ENCODE measurements at regions of chr12 and their contacts with region 1.

Region 1: GRCh38 chr12:88153959-88154358 is 11.9 kb downstream of the TMTC3 start:
- DNase-seq: peak; percentile 46
- H3K4me3 Mint-ChIP-seq: no peak overlapping the region
- H3K27ac Mint-ChIP-seq: no peak overlapping the region
- H3K4me1 Mint-ChIP-seq: peaks cover 8% of the 10 kb centered on the region
- H3K27me3 Mint-ChIP-seq: no peaks in the 10 kb centered on the region
- CTCF ChIP-seq: peak; percentile 50

Region 2: DNA sequence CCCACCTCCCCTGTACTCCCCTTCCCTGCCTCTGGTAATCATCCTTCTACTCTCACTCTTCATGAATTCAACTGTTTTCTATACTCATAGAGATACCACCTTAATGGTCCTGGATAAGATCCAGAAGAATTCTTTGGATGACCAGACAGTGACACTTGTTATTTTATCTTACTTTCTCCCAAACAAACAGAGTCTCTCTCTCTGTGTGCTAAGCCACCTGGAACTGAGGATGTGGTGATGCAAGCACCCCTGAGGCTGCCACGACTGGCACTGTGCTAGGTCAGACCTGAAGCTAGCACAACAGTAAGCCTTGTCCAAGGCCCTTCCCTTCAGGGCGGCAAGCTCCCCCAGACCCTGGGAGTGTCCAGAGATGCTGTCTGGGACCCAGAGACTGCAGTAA is 374.9 kb before region 1 on chr12:
- CTCF ChIA-PET with region 1: no interaction called
- POLR2A ChIA-PET with region 1: no interaction called
- intact Hi-C with region 1: no loop called
- DNase-seq: peak; percentile 59
- H3K4me3 Mint-ChIP-seq: no peak overlapping the region
- H3K27ac Mint-ChIP-seq: peak overlapping the region; percentile 56
- H3K4me1 Mint-ChIP-seq: peaks cover 25% of the 10 kb centered on the region
- H3K27me3 Mint-ChIP-seq: no peaks in the 10 kb centered on the region
- CTCF ChIP-seq: no peak

Region 3: GRCh38 chr12:88092771-88093170 is 61.2 kb before region 1 on chr12:
- CTCF ChIA-PET with region 1: no interaction called
- POLR2A ChIA-PET with region 1: no interaction called
- intact Hi-C with region 1: no loop called
- DNase-seq: no peak
- H3K4me3 Mint-ChIP-seq: no peak overlapping the region
- H3K27ac Mint-ChIP-seq: no peak overlapping the region
- H3K4me1 Mint-ChIP-seq: no peaks in the 10 kb centered on the region
- H3K27me3 Mint-ChIP-seq: no peaks in the 10 kb centered on the region
- CTCF ChIP-seq: no peak

Region 4: GRCh38 chr12:88141770-88142609 is 12.0 kb before region 1 on chr12 and contains the starts of genes CEP290 and TMTC3:
- CTCF ChIA-PET with region 1: interaction called, 9 read pairs
- POLR2A ChIA-PET with region 1: interaction called, 18 read pairs
- intact Hi-C with region 1: no loop called
- DNase-seq: peak; percentile 100
- H3K4me3 Mint-ChIP-seq: peak within 1 kb of the TSS; percentile 96
- H3K27ac Mint-ChIP-seq: peak within 1 kb of the TSS; percentile 81
- H3K4me1 Mint-ChIP-seq: peaks cover 38% of the 10 kb centered on the region
- H3K27me3 Mint-ChIP-seq: no peaks in the 10 kb centered on the region
- CTCF ChIP-seq: no peak
- total RNA-seq, gene CEP290: 18.7 and 22.3 TPM in 2 replicates
- total RNA-seq, gene TMTC3: 19.0 and 22.2 TPM in 2 replicates

Region 5: GRCh38 chr12:88299567-88300101 is 145.7 kb after region 1 on chr12:
- CTCF ChIA-PET with region 1: no interaction called
- POLR2A ChIA-PET with region 1: no interaction called
- intact Hi-C with region 1: loop called (anchors 5 kb)
- DNase-seq: peak; percentile 86
- H3K4me3 Mint-ChIP-seq: peak overlapping the region; percentile 19
- H3K27ac Mint-ChIP-seq: peak overlapping the region; percentile 85
- H3K4me1 Mint-ChIP-seq: peaks cover 16% of the 10 kb centered on the region
- H3K27me3 Mint-ChIP-seq: no peaks in the 10 kb centered on the region
- CTCF ChIP-seq: no peak

Region 6: GRCh38 chr12:88366101-88366500 is 212.1 kb after region 1 on chr12:
- CTCF ChIA-PET with region 1: no interaction called
- POLR2A ChIA-PET with region 1: no interaction called
- intact Hi-C with region 1: no loop called
- DNase-seq: no peak
- H3K4me3 Mint-ChIP-seq: no peak overlapping the region
- H3K27ac Mint-ChIP-seq: no peak overlapping the region
- H3K4me1 Mint-ChIP-seq: peaks cover 20% of the 10 kb centered on the region
- H3K27me3 Mint-ChIP-seq: no peaks in the 10 kb centered on the region
- CTCF ChIP-seq: no peak

Region 7: DNA sequence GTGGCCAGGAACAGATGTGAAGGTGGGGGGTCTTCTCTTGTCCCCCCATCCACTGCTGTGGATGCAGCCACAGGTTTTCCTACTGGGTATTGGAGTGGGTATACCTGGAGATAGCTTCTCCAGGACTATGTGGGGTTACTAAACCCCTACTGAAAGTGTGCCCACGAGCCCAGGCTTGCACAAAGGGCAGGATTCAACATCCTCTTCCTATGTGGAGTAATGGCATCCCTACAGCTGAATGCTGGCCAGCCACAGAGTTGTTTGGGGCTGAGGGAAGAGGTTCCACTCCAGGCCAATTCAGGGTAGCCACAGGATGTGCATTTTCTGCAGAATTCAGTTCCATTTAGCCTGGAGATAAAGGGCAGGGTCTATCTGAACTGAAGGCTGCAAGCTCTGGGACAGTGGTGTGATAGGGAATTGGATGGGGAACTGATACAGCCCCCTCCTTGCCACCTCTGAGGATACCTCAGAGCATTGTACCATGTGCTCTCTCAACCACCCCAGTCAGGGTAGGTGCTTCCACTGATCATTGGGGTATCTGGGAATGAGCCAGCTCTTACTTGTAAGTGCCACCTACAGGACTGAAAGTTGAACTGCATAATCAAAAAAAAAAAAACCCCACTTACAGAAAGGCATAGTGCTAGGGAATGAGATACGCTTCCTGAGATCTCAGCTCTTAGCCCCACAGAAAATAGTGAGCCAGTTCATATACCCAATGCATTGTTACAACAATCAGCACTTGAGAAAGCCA is 239.2 kb after region 1 on chr12:
- CTCF ChIA-PET with region 1: interaction called, 5 read pairs
- POLR2A ChIA-PET with region 1: no interaction called
- intact Hi-C with region 1: loop called (anchors 1 kb)
- DNase-seq: peak; percentile 57
- H3K4me3 Mint-ChIP-seq: no peak overlapping the region
- H3K27ac Mint-ChIP-seq: peak overlapping the region; percentile 23
- H3K4me1 Mint-ChIP-seq: peaks cover 17% of the 10 kb centered on the region
- H3K27me3 Mint-ChIP-seq: no peaks in the 10 kb centered on the region
- CTCF ChIP-seq: peak; percentile 52

Region 8: DNA sequence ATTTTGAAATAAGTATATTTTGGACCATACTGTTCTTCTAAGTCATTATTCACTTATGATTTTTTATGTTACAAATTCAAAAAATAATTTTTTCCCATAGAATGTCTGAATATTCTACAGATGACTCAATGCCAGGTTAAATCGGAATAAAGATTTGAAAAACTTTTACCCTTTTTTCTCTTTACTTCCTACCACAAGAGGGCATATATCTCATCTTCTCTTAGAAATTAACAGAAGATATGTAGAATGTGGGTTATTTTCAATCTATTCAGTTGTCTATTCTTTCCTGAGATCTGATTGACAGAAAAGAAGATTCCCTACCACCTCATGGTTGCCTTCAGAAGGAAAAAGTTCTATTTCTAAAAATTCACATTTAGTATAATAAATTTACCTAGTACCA is 479.4 kb after region 1 on chr12:
- CTCF ChIA-PET with region 1: no interaction called
- POLR2A ChIA-PET with region 1: no interaction called
- intact Hi-C with region 1: loop called (anchors 5 kb)
- DNase-seq: peak; percentile 13
- H3K4me3 Mint-ChIP-seq: no peak overlapping the region
- H3K27ac Mint-ChIP-seq: no peak overlapping the region
- H3K4me1 Mint-ChIP-seq: peaks cover 16% of the 10 kb centered on the region
- H3K27me3 Mint-ChIP-seq: no peaks in the 10 kb centered on the region
- CTCF ChIP-seq: peak; percentile 31

Region 9: GRCh38 chr12:88993651-88994050 is 839.7 kb after region 1 on chr12:
- CTCF ChIA-PET with region 1: interaction called, 20 read pairs
- POLR2A ChIA-PET with region 1: no interaction called
- intact Hi-C with region 1: loop called (anchors 1 kb)
- DNase-seq: peak; percentile 62
- H3K4me3 Mint-ChIP-seq: no peak overlapping the region
- H3K27ac Mint-ChIP-seq: no peak overlapping the region
- H3K4me1 Mint-ChIP-seq: no peaks in the 10 kb centered on the region
- H3K27me3 Mint-ChIP-seq: no peaks in the 10 kb centered on the region
- CTCF ChIP-seq: peak; percentile 55

Region 10: GRCh38 chr12:89373763-89374572 is 1220.0 kb after region 1 on chr12:
- CTCF ChIA-PET with region 1: no interaction called
- POLR2A ChIA-PET with region 1: no interaction called
- intact Hi-C with region 1: no loop called
- DNase-seq: peak; percentile 83
- H3K4me3 Mint-ChIP-seq: no peak overlapping the region
- H3K27ac Mint-ChIP-seq: peak overlapping the region; percentile 49
- H3K4me1 Mint-ChIP-seq: peaks cover 53% of the 10 kb centered on the region
- H3K27me3 Mint-ChIP-seq: no peaks in the 10 kb centered on the region
- CTCF ChIP-seq: no peak